CD8-positive, alpha-beta T cell (primary cell): ENCODE measurements at regions of chr20 and their contacts with region 1.

Region 1: DNA sequence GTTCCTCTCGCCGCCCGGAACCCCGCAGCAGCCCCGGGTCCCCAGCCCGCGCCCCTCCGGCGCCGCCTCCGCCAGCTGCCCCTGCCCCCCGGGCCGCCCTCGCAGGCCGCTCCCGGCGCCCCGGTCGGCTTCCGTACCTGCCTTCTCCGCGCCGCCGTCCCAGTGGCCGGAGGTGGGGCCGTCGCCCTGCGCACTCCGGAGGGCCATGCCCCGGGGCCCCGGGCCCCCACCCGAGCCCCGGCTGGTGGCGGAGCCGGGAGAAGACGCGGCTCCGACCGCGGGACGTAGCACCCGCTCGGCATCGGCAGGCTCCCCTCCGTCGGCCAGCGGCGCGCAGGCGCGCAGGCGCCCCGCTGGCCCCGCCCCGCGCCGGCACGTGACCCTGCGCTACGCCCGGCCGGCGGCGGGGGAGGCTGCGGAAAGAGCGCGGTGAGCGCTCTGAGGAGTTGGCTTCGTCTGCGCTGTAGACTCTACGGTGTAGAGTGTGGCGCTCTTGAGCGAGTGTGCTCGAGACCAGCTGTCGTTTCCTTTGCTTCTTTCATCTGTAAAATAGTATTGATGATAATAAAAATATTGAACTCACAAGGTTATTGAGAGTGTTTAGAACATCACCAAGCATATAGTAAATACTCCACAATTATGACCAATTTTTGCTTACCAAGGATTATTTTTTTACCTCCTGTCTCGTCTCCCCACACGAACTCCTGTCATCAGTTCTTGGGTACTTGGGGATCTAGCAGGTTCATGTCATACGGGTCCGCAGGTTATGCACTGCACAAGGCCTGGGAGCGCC is at the start of gene TBC1D20:
- DNase-seq: peak; percentile 72 to 95 (median 84)
- ATAC-seq: peak; percentile 95
- H3K4me3 ChIP-seq: peak within 1 kb of the TSS; percentile 74 to 87
- H3K4me3 Mint-ChIP-seq: peak within 1 kb of the TSS; percentile 99
- H3K27ac ChIP-seq: peak within 1 kb of the TSS; percentile 67 to 77
- H3K27ac Mint-ChIP-seq: peak within 1 kb of the TSS; percentile 96
- H3K4me1 ChIP-seq: peaks cover 30% of the 10 kb centered on the region
- H3K4me1 Mint-ChIP-seq: peaks cover 45% of the 10 kb centered on the region
- H3K27me3 ChIP-seq: no peaks in the 10 kb centered on the region
- H3K27me3 Mint-ChIP-seq: no peaks in the 10 kb centered on the region
- CTCF ChIP-seq: no peak
- total RNA-seq, gene TBC1D20: 18.5 to 20.3 TPM

Region 2: GRCh38 chr20:381581-382290 is 80.7 kb before region 1 on chr20:
- CTCF ChIA-PET with region 1: interaction called, 3 read pairs
- POLR2A ChIA-PET with region 1: interaction called, 5 read pairs
- intact Hi-C with region 1: loop called in 1 of 2 experiments (anchors 1 kb)
- DNase-seq: peak; percentile 35 to 87 (median 70)
- ATAC-seq: peak; percentile 67
- H3K4me3 ChIP-seq: peak overlapping the region; percentile 76 to 77
- H3K4me3 Mint-ChIP-seq: peak overlapping the region; percentile 80
- H3K27ac ChIP-seq: peak overlapping the region; percentile 27 to 48
- H3K27ac Mint-ChIP-seq: peak overlapping the region; percentile 78
- H3K4me1 ChIP-seq: no peaks in the 10 kb centered on the region
- H3K4me1 Mint-ChIP-seq: peaks cover 13% of the 10 kb centered on the region
- H3K27me3 ChIP-seq: no peaks in the 10 kb centered on the region
- H3K27me3 Mint-ChIP-seq: no peaks in the 10 kb centered on the region
- CTCF ChIP-seq: no peak

Region 3: GRCh38 chr20:407133-407952 is 55.1 kb before region 1 on chr20:
- CTCF ChIA-PET with region 1: interaction called, 4 read pairs
- POLR2A ChIA-PET with region 1: interaction called, 3 read pairs
- intact Hi-C with region 1: loop called (anchors 1 kb)
- DNase-seq: peak in 7 of 9 experiments; percentile 48 to 83 (median 68)
- ATAC-seq: peak; percentile 71
- H3K4me3 ChIP-seq: peak overlapping the region; percentile 56 to 71
- H3K4me3 Mint-ChIP-seq: peak overlapping the region; percentile 91
- H3K27ac ChIP-seq: peak overlapping the region; percentile 9 to 41
- H3K27ac Mint-ChIP-seq: peak overlapping the region; percentile 95
- H3K4me1 ChIP-seq: peaks cover 34% of the 10 kb centered on the region
- H3K4me1 Mint-ChIP-seq: peaks cover 47% of the 10 kb centered on the region
- H3K27me3 ChIP-seq: no peaks in the 10 kb centered on the region
- H3K27me3 Mint-ChIP-seq: no peaks in the 10 kb centered on the region
- CTCF ChIP-seq: peak; percentile 45

Region 4: DNA sequence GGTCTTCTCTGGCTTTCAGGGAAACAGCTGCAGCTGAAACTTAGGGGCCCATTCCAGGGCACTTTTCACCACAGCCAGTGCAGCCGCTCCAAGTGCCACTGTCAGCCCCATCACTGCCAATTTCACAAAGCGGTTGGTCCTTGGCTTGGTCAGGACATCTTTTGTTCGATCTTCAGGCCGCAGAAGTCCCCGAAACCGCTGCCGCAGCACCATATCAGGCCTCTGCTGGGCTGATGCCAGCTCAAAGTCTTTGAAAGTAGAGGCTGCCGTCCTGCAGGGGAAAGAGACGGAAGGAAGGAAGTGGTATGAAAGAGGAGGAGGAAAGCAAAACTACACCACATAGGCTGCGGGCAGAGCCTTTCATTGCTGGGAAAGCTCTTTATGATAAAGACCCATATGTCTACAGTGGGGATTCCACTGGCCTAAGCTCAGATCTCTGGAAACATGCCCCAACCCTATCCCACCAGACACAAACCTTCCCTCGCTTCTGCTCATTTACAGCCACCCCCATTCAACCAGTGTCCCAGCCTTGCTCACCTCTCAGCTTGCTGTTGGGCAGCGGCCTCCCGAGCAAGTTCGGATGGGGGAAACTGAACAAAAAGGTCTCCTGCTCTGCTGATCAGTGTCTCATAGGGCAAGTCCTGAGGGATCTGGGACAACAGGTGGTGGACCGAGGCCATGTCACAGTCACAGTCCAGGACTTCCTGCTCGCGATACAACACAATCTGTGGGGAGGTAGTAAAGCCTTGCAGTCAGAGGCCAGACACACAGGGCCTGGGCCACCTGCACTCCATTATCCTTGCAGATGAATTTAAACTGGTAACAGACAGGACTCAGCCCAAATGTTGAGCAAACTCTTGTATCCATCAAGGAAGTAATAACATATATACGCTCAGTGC is 23.6 kb before region 1 on chr20:
- CTCF ChIA-PET with region 1: interaction called, 3 read pairs
- POLR2A ChIA-PET with region 1: interaction called, 11 read pairs
- intact Hi-C with region 1: loop called (anchors 2 kb)
- DNase-seq: peak; percentile 18 to 86 (median 65)
- ATAC-seq: peak; percentile 80
- H3K4me3 ChIP-seq: peak overlapping the region; percentile 31 to 43
- H3K4me3 Mint-ChIP-seq: peak overlapping the region; percentile 74
- H3K27ac ChIP-seq: peak overlapping the region in 1 of 2 experiments; percentile 55
- H3K27ac Mint-ChIP-seq: peak overlapping the region; percentile 47
- H3K4me1 ChIP-seq: peaks cover 39% of the 10 kb centered on the region
- H3K4me1 Mint-ChIP-seq: peaks cover 50% of the 10 kb centered on the region
- H3K27me3 ChIP-seq: no peaks in the 10 kb centered on the region
- H3K27me3 Mint-ChIP-seq: no peaks in the 10 kb centered on the region
- CTCF ChIP-seq: no peak

Region 5: GRCh38 chr20:478949-479429 is 16.6 kb after region 1 on chr20:
- CTCF ChIA-PET with region 1: interaction called, 11 read pairs
- POLR2A ChIA-PET with region 1: interaction called, 4 read pairs
- intact Hi-C with region 1: loop called (anchors 1 kb)
- DNase-seq: peak in 4 of 9 experiments; percentile 20 to 80 (median 58)
- ATAC-seq: peak; percentile 86
- H3K4me3 ChIP-seq: no peak overlapping the region
- H3K4me3 Mint-ChIP-seq: no peak overlapping the region
- H3K27ac ChIP-seq: no peak overlapping the region
- H3K27ac Mint-ChIP-seq: no peak overlapping the region
- H3K4me1 ChIP-seq: peaks cover 13% of the 10 kb centered on the region
- H3K4me1 Mint-ChIP-seq: peaks cover 19% of the 10 kb centered on the region
- H3K27me3 ChIP-seq: no peaks in the 10 kb centered on the region
- H3K27me3 Mint-ChIP-seq: no peaks in the 10 kb centered on the region
- CTCF ChIP-seq: peak; percentile 82